Dendritic cell treated with granulocyte-macrophage colony-stimulating factor and Interleukin-4, amounts not matched to agents 40 ng/mL and 50 ng/mL, for 4 days (primary cell): ENCODE measurements at regions of chr9 and their contacts with region 1.

Region 1: GRCh38 chr9:95317119-95317892 is at the start of gene FANCC:
- H3K4me3 Mint-ChIP-seq: peak within 1 kb of the TSS; percentile 92
- H3K27ac Mint-ChIP-seq: peak within 1 kb of the TSS; percentile 95
- H3K4me1 Mint-ChIP-seq: peaks cover 21% of the 10 kb centered on the region
- H3K27me3 Mint-ChIP-seq: peaks cover 26% of the 10 kb centered on the region

Region 2: GRCh38 chr9:94726495-94727191 is 590.7 kb before region 1 on chr9 and contains the start of gene AOPEP:
- intact Hi-C with region 1: loop called (anchors 2 kb)
- H3K4me3 Mint-ChIP-seq: peak within 1 kb of the TSS; percentile 85
- H3K27ac Mint-ChIP-seq: peak within 1 kb of the TSS; percentile 92
- H3K4me1 Mint-ChIP-seq: peaks cover 17% of the 10 kb centered on the region
- H3K27me3 Mint-ChIP-seq: peaks cover 2% of the 10 kb centered on the region

Region 3: DNA sequence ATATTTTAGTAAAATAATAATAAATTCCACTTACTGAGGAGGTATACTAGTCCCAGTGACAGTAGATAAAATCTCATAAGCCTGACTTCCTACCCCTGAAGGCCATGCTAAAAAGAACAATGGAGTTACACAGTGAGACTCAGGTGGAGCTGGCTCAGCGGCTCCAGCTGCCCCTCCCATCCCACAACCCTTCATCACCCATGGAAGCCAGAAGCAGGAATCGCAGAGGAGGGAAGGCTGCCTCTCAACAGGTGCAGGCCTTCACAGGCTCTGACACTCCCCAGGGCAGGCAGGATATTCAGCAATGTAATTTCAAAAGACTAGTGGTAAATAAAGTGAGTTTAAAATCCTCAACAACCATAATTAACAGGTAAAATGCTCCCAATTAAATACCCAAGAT is 67.3 kb before region 1 on chr9:
- intact Hi-C with region 1: no loop called
- H3K4me3 Mint-ChIP-seq: no peak overlapping the region
- H3K27ac Mint-ChIP-seq: no peak overlapping the region
- H3K4me1 Mint-ChIP-seq: no peaks in the 10 kb centered on the region
- H3K27me3 Mint-ChIP-seq: no peaks in the 10 kb centered on the region